ENCODE measurements at regions of chr16 and their contacts with region 1.

Region 1: DNA sequence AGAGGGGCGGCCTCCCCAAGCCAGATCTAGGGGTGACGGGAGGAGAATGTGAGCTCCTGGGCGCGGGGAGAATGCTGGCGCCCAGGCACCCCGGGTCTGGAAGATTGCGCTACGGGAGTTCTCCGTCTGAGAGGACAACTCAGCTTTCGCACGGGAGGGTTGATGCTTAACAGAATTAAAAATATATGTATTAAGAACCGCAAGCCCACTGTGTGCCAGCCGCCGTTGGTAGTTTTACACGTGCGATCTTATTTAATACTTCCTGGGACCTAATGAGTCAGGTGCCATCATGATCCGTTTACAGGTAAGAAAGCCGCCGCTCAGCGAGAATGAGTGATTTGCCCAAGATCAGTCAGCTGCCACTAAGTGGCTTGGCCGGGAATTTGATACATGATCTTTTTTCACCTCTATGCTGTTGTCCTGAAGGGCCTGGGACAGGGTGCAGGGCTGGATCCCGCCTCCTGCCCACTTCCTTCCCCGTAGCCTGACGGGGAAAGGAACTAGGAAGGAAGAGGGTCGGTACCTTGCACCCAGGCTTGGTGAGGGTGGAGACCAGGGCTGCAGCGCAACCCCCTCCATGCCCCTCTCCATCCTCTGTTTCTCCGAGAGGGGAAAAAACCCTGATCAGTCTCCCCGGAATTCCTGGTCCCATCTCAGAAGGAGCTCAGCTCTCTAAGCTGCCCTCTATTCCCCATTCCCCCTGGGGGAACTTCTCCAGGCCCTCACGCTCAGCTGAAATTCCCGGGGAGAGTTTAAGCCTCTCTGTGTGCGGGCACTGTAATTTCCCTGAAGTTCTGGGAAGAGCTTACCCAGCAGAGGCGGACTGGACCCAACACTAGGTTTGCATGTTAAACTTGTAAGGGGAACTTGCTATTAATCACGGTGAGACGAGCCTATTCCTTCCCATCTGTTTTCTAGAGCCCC is 983 bp downstream of the VAT1L start:
- DNase-seq: no peak
- ATAC-seq: no peak
- H3K4me3 ChIP-seq: peak overlapping the region; percentile 56
- H3K27ac ChIP-seq: no peak overlapping the region
- H3K4me1 ChIP-seq: no peaks in the 10 kb centered on the region
- H3K27me3 ChIP-seq: peaks cover 2 to 66% (median 14%) of the 10 kb centered on the region in 3 donors
- CTCF ChIP-seq: no peak

Region 2: GRCh38 chr16:77868478-77868877 is 79.1 kb after region 1 on chr16:
- intact Hi-C with region 1: loop called in 1 of 2 experiments (anchors 5 kb)
- DNase-seq: no peak
- ATAC-seq: no peak
- H3K4me3 ChIP-seq: no peak overlapping the region
- H3K27ac ChIP-seq: no peak overlapping the region
- H3K4me1 ChIP-seq: no peaks in the 10 kb centered on the region
- H3K27me3 ChIP-seq: peaks cover 0 to 7% (median 2%) of the 10 kb centered on the region in 3 donors
- CTCF ChIP-seq: no peak

Region 3: GRCh38 chr16:78639775-78640174 is 850.4 kb after region 1 on chr16:
- intact Hi-C with region 1: no loop called
- DNase-seq: no peak
- ATAC-seq: no peak
- H3K4me3 ChIP-seq: no peak overlapping the region
- H3K27ac ChIP-seq: no peak overlapping the region
- H3K4me1 ChIP-seq: no peaks in the 10 kb centered on the region
- H3K27me3 ChIP-seq: no peaks in the 10 kb centered on the region
- CTCF ChIP-seq: no peak